GM10248 (cell line): ENCODE measurements at regions of chr10 and their contacts with region 1.

Region 1: GRCh38 chr10:4839401-4839800 is 13.4 kb downstream of the AKR1E2 start:
- DNase-seq: no peak
- CTCF ChIP-seq: no peak

Region 2: GRCh38 chr10:4825851-4826665 is 13.3 kb before region 1 on chr10 and contains the start of gene AKR1E2:
- CTCF ChIA-PET with region 1: interaction called, 12 read pairs
- POLR2A ChIA-PET with region 1: no interaction called
- DNase-seq: peak; percentile 39
- CTCF ChIP-seq: no peak